ENCODE measurements at regions of chr5 and their contacts with region 1.

Region 1: GRCh38 chr5:671459-672328 is 21.5 kb downstream of the TPPP start:
- DNase-seq: peak; percentile 77
- H3K4me3 Mint-ChIP-seq: no peak overlapping the region
- H3K27ac Mint-ChIP-seq: no peak overlapping the region
- H3K4me1 Mint-ChIP-seq: peaks cover 12% of the 10 kb centered on the region
- H3K27me3 Mint-ChIP-seq: peaks cover 4% of the 10 kb centered on the region

Region 2: GRCh38 chr5:616481-617039 is 55.1 kb before region 1 on chr5:
- CTCF ChIA-PET with region 1: no interaction called
- intact Hi-C with region 1: no loop called
- DNase-seq: peak; percentile 4
- H3K4me3 Mint-ChIP-seq: no peak overlapping the region
- H3K27ac Mint-ChIP-seq: no peak overlapping the region
- H3K4me1 Mint-ChIP-seq: peaks cover 33% of the 10 kb centered on the region
- H3K27me3 Mint-ChIP-seq: no peaks in the 10 kb centered on the region

Region 3: DNA sequence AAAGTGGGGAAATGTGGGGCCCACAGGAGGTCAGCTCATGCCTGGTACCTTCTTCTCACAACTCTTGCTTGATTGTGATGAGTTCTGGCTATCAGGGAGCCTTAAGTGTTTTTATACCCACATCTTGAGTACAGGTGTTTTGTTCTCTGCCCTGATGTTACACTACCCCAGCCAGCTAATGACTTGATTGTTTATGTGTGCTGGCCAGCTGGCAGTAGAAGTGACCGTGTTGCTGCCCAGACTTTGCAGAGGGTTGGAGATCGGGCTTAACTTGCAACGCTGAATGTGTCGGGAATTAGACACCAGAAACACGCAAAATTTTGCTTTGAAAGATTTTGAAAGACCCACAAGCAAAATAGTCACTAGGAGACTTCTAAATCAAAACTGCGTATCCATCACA is 129.8 kb after region 1 on chr5:
- CTCF ChIA-PET with region 1: no interaction called
- intact Hi-C with region 1: no loop called
- DNase-seq: no peak
- H3K4me3 Mint-ChIP-seq: no peak overlapping the region
- H3K27ac Mint-ChIP-seq: no peak overlapping the region
- H3K4me1 Mint-ChIP-seq: no peaks in the 10 kb centered on the region
- H3K27me3 Mint-ChIP-seq: no peaks in the 10 kb centered on the region

Region 4: GRCh38 chr5:892394-893136 is 220.9 kb after region 1 on chr5 and contains the starts of genes BRD9 and TRIP13:
- CTCF ChIA-PET with region 1: interaction called, 5 read pairs
- intact Hi-C with region 1: loop called (anchors 2 kb)
- DNase-seq: peak; percentile 86
- H3K4me3 Mint-ChIP-seq: peak within 1 kb of the TSS; percentile 87
- H3K27ac Mint-ChIP-seq: peak within 1 kb of the TSS; percentile 77
- H3K4me1 Mint-ChIP-seq: peaks cover 34% of the 10 kb centered on the region
- H3K27me3 Mint-ChIP-seq: no peaks in the 10 kb centered on the region
- total RNA-seq, gene BRD9: 42.4 to 45.4 TPM
- total RNA-seq, gene TRIP13: 24.0 to 29.9 TPM

Region 5: DNA sequence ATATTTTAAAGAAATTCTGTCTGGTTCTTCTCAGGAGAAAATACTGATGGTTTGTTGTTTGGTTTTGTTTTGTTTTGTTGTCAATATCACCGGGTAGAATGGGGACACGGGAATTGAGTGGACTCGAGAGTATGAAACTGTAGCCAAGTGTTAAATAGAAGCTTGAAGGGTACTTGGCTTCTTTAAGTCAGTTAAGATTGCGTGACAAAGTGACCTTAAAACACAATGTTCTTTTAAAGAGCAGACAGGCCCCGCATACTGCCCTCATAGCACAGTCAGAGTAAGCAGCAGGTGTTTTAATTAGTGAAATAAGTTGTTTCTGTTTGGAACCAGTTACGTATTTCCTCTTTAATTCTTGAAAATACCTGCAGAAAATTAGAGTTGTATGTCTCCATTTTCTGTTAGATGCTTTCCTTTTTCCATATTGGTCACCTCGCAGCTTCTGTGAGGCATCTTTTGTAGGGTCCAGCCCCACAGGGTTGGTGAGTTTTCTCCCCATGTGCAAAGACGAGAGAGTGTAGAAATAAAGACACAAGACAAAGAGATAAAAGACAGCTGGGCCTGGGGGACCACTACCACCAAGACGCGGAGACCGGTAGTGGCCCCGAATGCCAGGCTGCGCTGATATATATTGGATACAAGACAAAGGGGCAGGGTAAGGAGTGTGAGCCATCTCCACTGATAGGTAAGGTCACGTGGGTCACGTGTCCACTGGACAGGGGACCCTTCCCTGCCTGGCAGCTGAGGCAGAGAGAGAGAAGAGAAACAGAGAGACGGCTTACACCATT is 230.6 kb after region 1 on chr5:
- CTCF ChIA-PET with region 1: interaction called, 3 read pairs
- intact Hi-C with region 1: loop called (anchors 2 kb)
- DNase-seq: no peak
- H3K4me3 Mint-ChIP-seq: no peak overlapping the region
- H3K27ac Mint-ChIP-seq: no peak overlapping the region
- H3K4me1 Mint-ChIP-seq: no peaks in the 10 kb centered on the region
- H3K27me3 Mint-ChIP-seq: no peaks in the 10 kb centered on the region

Measured in activated naive CD4-positive, alpha-beta T cell treated with anti-CD3 and anti-CD28 coated beads for 36 hours (primary cell).